Sigmoid colon (tissue), 7 donors: ENCODE measurements at regions of chr22 and their contacts with region 1.

Region 1: DNA sequence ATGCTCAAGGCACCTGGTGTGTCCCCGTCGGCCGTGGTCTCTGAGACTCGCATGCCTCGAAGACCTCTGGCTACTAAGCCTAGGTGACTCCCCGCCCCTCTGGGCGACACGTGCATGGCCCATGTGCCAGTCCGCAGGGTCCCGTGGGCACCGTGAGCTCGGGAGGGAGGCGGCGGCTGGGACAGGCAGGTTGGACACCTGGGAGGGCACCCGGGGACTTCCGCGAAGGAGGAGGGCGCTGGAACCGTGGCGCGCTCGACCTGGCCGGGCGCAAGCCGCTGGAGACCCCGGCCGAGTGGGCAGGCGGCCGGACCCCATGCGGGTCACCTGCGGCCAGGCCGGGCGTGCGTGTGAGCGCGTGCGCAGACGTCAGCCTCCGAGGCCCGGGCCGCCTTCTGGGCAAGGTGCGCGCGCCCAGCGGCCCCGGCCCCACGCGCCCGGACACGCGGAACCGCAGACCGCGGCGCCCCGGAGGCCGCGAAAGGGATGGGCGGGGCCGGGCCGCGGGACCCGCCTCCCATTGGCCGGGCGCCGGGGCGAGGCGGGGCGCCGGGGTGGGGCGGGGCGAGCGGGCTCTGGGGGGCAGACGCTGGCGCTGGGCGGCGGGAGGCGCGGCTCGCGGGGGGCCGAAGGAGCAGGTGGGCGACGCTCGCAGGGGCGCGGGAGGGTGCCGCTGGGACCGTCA is 579 bp upstream of the RASD2 start:
- DNase-seq: peak; percentile 81
- H3K4me3 ChIP-seq: peak overlapping the region; percentile 62 to 79 (median 68)
- H3K27ac ChIP-seq: peak overlapping the region; percentile 77 to 94 (median 88)
- H3K4me1 ChIP-seq: peaks cover 0 to 51% (median 44%) of the 10 kb centered on the region in 4 donors
- H3K27me3 ChIP-seq: peaks cover 0 to 3% (median 0%) of the 10 kb centered on the region in 3 donors
- CTCF ChIP-seq: no peak
- EP300 ChIP-seq: no peak
- POLR2A ChIP-seq: no peak

Region 2: DNA sequence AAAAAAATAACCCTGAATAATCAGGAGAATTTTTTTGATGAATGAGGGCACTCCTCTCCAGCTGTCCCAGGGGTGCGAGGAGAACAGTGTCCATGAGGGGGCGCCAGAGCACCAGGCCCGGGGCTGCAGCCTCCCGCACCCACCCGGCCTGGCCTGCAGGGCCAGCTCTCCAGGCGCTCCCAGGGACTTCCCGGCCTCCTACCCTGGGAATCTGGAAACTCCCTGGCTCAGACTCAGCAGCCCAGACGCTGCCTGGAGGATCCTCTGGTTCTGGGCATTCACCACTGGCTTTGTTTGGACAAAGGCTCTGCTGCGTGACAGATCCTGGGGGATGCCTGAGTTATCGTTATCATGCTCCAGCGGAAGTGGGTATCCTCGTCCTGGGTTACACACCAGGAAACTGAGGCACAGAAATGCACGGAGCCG is 109.1 kb before region 1 on chr22:
- intact Hi-C with region 1: loop called (anchors 5 kb)
- DNase-seq: peak; percentile 97
- H3K4me3 ChIP-seq: no peak overlapping the region
- H3K27ac ChIP-seq: peak overlapping the region; percentile 45 to 76 (median 73)
- H3K4me1 ChIP-seq: peaks cover 0 to 22% (median 19%) of the 10 kb centered on the region in 4 donors
- H3K27me3 ChIP-seq: no peaks in the 10 kb centered on the region
- CTCF ChIP-seq: peak; percentile 98 to 99 (median 99)
- EP300 ChIP-seq: peak in 3 of 4 donors; percentile 22 to 78 (median 55)
- POLR2A ChIP-seq: no peak

Region 3: GRCh38 chr22:35446365-35446764 is 93.7 kb before region 1 on chr22:
- intact Hi-C with region 1: loop called (anchors 2 kb)
- DNase-seq: peak; percentile 91
- H3K4me3 ChIP-seq: no peak overlapping the region
- H3K27ac ChIP-seq: peak overlapping the region; percentile 55 to 87 (median 85)
- H3K4me1 ChIP-seq: peaks cover 0 to 58% (median 31%) of the 10 kb centered on the region in 4 donors
- H3K27me3 ChIP-seq: no peaks in the 10 kb centered on the region
- CTCF ChIP-seq: no peak
- EP300 ChIP-seq: peak in 2 of 4 donors; percentile 23 to 77
- POLR2A ChIP-seq: no peak

Region 4: GRCh38 chr22:35622191-35622913 is 82.3 kb after region 1 on chr22:
- intact Hi-C with region 1: loop called (anchors 5 kb)
- DNase-seq: peak; percentile 88
- H3K4me3 ChIP-seq: no peak overlapping the region
- H3K27ac ChIP-seq: peak overlapping the region; percentile 80 to 85 (median 82)
- H3K4me1 ChIP-seq: peaks cover 0 to 42% (median 36%) of the 10 kb centered on the region in 4 donors
- H3K27me3 ChIP-seq: no peaks in the 10 kb centered on the region
- CTCF ChIP-seq: no peak
- EP300 ChIP-seq: peak in 1 of 4 donors; percentile 2
- POLR2A ChIP-seq: no peak

Region 5: DNA sequence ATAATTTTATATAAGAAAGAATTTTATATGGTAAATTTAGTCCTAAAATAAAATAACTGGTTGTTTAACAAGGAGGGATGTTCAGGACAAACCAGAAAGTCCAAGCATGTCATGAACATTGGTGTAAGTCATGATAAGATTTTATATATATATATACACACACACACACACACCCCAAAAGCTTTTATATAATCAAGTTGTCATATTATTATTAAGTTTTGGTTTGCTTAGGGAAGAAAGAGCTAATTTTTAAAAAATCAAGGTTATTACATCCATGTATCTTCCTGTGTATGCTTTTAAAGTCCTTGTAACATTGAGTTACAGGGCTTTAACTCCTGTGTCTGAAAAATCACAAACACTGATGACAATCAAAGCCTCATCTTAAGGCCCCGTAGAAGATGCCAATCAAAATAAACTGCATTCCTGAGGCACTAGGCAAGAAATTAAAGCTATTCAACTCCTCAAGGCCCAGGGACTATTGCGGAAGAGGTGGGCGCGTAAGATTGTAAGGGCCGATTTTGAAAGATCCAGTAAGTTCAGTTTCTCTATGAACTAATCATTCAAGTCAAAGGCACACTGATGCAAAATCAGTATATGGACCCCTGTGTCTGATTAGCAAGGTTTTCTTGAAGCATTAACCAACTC is 125.0 kb after region 1 on chr22:
- intact Hi-C with region 1: no loop called
- DNase-seq: no peak
- H3K4me3 ChIP-seq: no peak overlapping the region
- H3K27ac ChIP-seq: peak overlapping the region in 1 of 4 donors; percentile 63
- H3K4me1 ChIP-seq: peaks cover 0 to 17% (median 8%) of the 10 kb centered on the region in 4 donors
- H3K27me3 ChIP-seq: no peaks in the 10 kb centered on the region
- CTCF ChIP-seq: no peak
- EP300 ChIP-seq: no peak
- POLR2A ChIP-seq: no peak

Region 6: GRCh38 chr22:35840302-35840739 is 300.3 kb after region 1 on chr22:
- intact Hi-C with region 1: no loop called
- DNase-seq: peak; percentile 94
- H3K4me3 ChIP-seq: peak overlapping the region; percentile 26 to 53 (median 46)
- H3K27ac ChIP-seq: peak overlapping the region; percentile 76 to 86 (median 82)
- H3K4me1 ChIP-seq: peaks cover 0 to 81% (median 52%) of the 10 kb centered on the region in 4 donors
- H3K27me3 ChIP-seq: no peaks in the 10 kb centered on the region
- CTCF ChIP-seq: no peak
- EP300 ChIP-seq: peak in 1 of 4 donors; percentile 3
- POLR2A ChIP-seq: peak in 1 of 2 donors; percentile 40